Activated CD8-positive, alpha-beta T cell treated with anti-CD3 and anti-CD28 coated beads, Interleukin-2, amount 10 ng/mL, durations not matched to agents 7 days and 5 days (primary cell): ENCODE measurements at regions of chr11 and their contacts with region 1.

Region 1: DNA sequence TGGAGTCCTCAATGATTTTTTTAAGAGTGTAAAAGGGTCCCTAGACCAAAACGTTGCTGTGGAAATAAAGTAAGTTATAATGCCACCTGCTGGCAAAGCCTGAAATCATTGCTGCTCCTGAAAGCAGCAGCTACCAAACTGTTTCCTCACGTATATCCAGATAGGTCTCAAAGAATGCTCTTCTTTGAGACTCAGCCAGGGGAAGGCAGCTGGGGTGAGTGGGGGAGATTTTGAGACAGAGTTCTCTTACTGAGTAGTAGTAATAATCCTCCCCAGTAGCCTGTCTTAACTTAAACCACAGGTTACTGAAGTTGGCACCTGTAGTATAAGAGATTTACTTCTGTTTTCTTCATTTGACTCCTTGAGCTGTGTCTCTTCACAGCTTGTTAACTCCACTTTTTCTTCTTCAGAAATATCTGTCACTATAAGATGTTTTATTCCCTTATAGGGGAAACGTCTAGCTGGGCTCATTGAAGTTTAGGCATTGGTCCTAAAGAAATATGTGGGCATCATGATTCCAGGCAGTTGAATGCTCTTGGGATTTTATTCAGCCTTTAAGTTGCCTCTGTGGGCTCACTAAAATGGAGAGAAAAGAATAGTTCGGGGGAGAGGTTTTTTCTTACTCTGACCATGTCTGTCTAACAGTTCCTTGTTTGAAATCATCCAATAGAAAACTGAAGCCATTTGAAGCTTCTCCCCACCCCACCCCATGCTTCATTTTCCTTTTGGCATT is 77.9 kb downstream of the BTBD10 start:
- DNase-seq: peak; percentile 53
- ATAC-seq: peak; percentile 33
- H3K4me3 Mint-ChIP-seq: no peak overlapping the region
- H3K27ac Mint-ChIP-seq: peak overlapping the region; percentile 34
- H3K4me1 Mint-ChIP-seq: no peaks in the 10 kb centered on the region
- H3K27me3 Mint-ChIP-seq: no peaks in the 10 kb centered on the region

Region 2: DNA sequence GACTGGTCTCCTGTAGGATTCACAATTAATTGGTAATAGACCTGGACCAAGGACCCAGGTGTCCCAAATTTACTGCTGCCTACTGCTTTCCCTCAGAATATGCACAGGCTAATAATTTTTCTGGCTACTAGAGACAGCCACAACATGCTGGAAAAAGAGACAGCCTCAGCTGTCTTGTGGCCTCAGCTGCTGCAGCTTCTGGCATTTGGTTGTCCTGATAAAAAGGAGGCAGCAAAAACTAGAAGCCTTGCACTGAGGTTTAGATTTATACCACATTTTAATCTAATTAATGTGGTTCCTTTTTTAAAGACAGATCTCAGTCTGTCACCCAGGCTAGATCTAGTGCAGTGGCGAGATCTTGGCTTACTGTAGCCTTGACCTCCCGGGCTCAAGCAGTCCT is 11.9 kb before region 1 on chr11:
- CTCF ChIA-PET with region 1: interaction called, 14 read pairs
- POLR2A ChIA-PET with region 1: no interaction called
- DNase-seq: no peak
- ATAC-seq: no peak
- H3K4me3 Mint-ChIP-seq: no peak overlapping the region
- H3K27ac Mint-ChIP-seq: no peak overlapping the region
- H3K4me1 Mint-ChIP-seq: no peaks in the 10 kb centered on the region
- H3K27me3 Mint-ChIP-seq: no peaks in the 10 kb centered on the region